Calu3 (cell line): ENCODE measurements at regions of chr4 and their contacts with region 1.

Region 1: DNA sequence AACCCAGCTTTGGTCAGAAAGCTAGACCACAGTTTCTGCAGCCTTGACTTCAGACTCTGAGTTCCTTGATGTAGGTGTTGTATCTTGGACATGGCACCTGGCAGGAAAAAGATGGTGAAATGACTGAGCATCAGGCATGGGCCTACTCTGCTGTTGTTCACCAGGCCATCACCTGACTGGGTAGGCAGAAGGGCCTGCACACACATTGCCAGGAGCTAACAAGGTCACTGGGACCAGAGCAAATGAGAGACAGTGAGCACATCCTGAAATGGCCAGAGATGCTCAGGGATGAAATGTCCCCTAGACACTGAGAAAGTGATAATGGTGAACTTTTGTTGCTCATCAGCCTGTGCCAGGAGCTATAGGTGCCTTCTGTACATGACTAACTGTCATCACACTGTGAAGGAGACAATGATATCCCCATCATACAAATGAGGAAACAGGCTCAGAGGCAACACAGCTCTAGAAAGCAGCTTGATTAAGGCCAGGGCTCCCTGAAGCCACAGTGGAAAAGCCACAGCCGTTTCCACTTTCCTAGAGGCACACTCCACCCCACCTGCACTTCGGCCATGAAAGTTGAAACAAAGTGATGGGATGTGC is 128.3 kb downstream of the TSPAN5 start:
- DNase-seq: no peak
- H3K4me3 Mint-ChIP-seq: no peak overlapping the region
- H3K27ac Mint-ChIP-seq: no peak overlapping the region
- H3K4me1 Mint-ChIP-seq: no peaks in the 10 kb centered on the region
- H3K27me3 Mint-ChIP-seq: peaks cover under 1% of the 10 kb centered on the region
- CTCF ChIP-seq: no peak

Region 2: DNA sequence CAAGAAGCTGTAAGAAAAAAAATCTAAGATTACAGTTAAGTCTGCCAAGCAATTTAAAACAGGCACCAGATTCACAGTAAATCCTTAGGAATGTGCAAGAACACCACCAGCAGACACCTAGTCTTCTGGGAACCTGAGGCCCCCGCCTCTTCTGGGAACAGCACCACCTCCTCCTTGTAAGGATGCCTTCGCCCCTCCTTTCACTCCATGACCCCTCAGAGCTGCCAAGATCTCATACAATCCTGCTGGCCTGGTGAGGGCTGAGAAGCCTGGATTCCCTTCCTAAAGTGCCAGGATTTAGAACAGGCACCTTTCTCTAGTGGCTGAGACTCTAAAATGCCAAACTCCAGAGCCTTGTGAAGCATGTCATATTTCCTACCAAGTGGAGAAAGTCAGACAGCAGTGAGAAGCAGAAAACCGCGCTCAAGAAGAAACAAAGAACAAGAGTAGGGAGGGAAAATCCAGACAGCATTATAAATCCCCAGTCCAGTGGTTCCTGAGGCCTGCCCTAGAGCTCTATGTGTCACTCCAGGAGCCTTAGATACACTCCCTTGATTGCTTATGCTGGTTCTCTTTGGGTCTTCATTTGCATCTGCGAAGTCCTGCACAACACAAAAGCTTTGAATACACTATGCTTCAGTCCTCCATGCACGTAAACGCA is 38.0 kb before region 1 on chr4:
- CTCF ChIA-PET with region 1: no interaction called
- intact Hi-C with region 1: loop called (anchors 2 kb)
- DNase-seq: no peak
- H3K4me3 Mint-ChIP-seq: no peak overlapping the region
- H3K27ac Mint-ChIP-seq: no peak overlapping the region
- H3K4me1 Mint-ChIP-seq: no peaks in the 10 kb centered on the region
- H3K27me3 Mint-ChIP-seq: no peaks in the 10 kb centered on the region
- CTCF ChIP-seq: no peak

Region 3: GRCh38 chr4:98612318-98613250 is 82.5 kb after region 1 on chr4:
- CTCF ChIA-PET with region 1: no interaction called
- intact Hi-C with region 1: no loop called
- DNase-seq: no peak
- H3K4me3 Mint-ChIP-seq: no peak overlapping the region
- H3K27ac Mint-ChIP-seq: no peak overlapping the region
- H3K4me1 Mint-ChIP-seq: no peaks in the 10 kb centered on the region
- H3K27me3 Mint-ChIP-seq: no peaks in the 10 kb centered on the region
- CTCF ChIP-seq: no peak

Region 4: DNA sequence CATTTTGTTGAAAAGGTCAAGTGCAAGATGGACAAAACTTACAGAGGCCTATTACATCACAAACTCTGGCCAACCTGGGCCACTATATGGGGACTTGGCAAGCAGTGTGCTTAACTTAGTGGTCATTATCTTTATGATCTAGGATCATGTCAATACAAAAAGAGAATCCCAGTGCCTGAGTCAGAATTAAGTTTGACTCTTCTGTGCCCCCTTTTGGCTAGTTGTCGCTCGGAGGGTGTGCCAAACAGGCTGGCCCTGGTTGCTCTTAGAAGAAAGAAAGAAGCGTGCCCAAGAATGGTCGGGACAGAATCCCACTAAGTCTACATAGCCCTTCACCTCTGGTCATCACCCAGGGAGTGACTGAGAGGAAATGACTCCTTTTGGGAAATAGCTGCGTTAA is 298.7 kb after region 1 on chr4:
- CTCF ChIA-PET with region 1: no interaction called
- intact Hi-C with region 1: no loop called
- DNase-seq: peak; percentile 12
- H3K4me3 Mint-ChIP-seq: no peak overlapping the region
- H3K27ac Mint-ChIP-seq: no peak overlapping the region
- H3K4me1 Mint-ChIP-seq: no peaks in the 10 kb centered on the region
- H3K27me3 Mint-ChIP-seq: no peaks in the 10 kb centered on the region
- CTCF ChIP-seq: no peak